HEK293 (cell line): ENCODE measurements at regions of chr7 and their contacts with region 1.

Region 1: DNA sequence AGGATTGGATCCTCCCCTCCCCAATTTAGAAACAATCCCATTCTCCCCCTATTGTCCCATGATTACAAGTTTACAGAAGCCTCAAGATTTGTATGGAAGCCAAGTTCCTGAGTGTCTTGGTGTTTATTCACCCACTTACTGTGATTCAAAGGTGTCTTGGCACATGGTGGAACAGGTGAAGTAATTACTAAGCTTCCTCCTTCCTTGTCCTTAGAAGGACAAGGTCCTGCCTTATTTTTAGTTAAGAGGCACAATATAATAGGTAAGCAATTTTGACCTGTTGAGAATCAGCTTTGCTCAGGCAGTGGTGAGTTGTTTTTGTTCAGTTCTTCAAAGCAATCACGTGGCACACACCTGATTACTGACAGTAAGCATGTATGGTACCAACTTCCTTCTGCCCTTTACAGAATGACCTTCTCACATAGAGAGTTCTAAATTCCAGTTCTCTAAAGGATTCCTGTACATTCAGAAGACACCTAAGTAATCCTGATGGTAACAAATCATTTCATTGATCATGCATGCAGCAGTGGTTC is 60.7 kb upstream of the SLC13A1 start:
- H3K4me3 ChIP-seq: no peak overlapping the region
- H3K27ac ChIP-seq: no peak overlapping the region
- H3K4me1 ChIP-seq: no peaks in the 10 kb centered on the region
- CTCF ChIP-seq: no peak

Region 2: DNA sequence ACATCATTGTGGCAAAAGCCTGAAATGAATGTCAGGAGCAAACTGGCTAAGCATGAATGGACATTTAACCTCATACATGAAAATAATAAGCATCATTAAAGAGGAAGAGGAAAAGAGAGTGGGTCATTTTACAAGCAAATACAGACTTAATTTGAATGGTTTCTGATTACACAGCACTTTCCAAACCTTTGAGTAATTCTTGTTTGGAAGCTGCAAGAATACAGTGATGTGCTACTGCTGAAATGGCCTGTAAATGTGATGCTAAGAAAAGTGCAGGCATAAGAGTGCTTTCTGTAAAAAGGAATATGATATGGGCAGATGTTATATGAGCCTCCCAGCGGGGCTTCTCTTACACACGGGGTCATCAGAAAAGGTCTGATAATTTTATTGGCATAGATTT is 295.2 kb before region 1 on chr7:
- CTCF ChIA-PET with region 1: no interaction called
- POLR2A ChIA-PET with region 1: interaction called, 12 read pairs
- H3K4me3 ChIP-seq: no peak overlapping the region
- H3K27ac ChIP-seq: no peak overlapping the region
- H3K4me1 ChIP-seq: peaks cover 8% of the 10 kb centered on the region
- CTCF ChIP-seq: no peak